ENCODE measurements at regions of chr2 and their contacts with region 1.

Region 1: DNA sequence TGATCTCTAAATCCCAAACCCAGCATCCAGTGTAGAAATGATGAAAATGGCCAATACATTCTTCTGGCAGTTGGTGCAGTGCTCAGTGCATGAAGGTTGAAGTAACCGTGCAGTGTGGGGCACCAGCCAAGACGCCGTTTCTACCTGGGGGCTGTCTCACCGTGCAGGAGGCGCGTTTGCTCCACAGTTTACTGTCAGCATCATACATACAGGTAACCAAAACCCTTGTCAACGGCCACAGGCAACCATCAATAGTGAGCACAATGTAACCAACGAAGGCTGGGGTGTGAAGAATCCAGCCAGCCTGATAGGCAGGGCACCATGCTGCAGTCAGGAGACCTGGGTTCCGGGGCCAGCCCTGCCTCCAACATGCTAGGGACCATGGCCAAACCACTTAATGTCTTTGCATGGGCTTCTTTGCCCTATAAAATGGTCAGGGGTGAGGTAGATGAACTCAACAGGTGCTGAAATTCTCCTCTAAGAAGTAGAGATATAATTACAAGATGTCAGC is 127.5 kb upstream of the ID2 start:
- DNase-seq: no peak
- H3K4me3 ChIP-seq: no peak overlapping the region
- H3K27ac ChIP-seq: no peak overlapping the region
- H3K4me1 ChIP-seq: no peaks in the 10 kb centered on the region
- H3K27me3 ChIP-seq: no peaks in the 10 kb centered on the region
- CTCF ChIP-seq: no peak
- POLR2A ChIP-seq: no peak

Region 2: GRCh38 chr2:8378016-8378810 is 176.1 kb before region 1 on chr2:
- intact Hi-C with region 1: no loop called
- DNase-seq: no peak
- H3K4me3 ChIP-seq: no peak overlapping the region
- H3K27ac ChIP-seq: no peak overlapping the region
- H3K4me1 ChIP-seq: no peaks in the 10 kb centered on the region
- H3K27me3 ChIP-seq: no peaks in the 10 kb centered on the region
- CTCF ChIP-seq: no peak
- POLR2A ChIP-seq: no peak

Region 3: DNA sequence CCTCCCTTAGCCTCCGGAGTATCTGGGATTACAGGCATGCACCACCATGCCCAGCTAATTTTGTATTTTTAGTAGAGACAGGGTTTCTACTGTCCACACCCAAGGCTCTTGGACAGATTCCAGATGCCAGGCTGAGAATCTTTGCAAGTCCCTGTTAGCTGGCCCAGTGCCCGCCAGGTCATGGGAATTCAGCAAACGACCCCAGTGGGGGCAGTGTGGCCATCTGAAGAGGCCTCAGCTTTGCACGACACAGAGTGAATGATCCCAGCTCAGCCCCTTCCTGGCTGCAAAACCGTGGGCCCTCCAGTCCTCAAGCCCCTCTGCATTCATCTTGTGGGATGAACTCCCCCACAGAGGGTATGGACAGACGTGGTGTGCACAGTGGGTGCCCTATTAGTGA is 52.0 kb before region 1 on chr2:
- intact Hi-C with region 1: loop called (anchors 2 kb)
- DNase-seq: no peak
- H3K4me3 ChIP-seq: no peak overlapping the region
- H3K27ac ChIP-seq: no peak overlapping the region
- H3K4me1 ChIP-seq: peaks cover 16% of the 10 kb centered on the region
- H3K27me3 ChIP-seq: no peaks in the 10 kb centered on the region
- CTCF ChIP-seq: no peak
- POLR2A ChIP-seq: no peak

Measured in prostate gland (tissue), 2 donors.